Aorta (tissue), 5 donors: ENCODE measurements at regions of chr7 and their contacts with region 1.

Region 1: GRCh38 chr7:30062591-30062990 is 34.4 kb downstream of the PLEKHA8 start:
- DNase-seq: no peak
- ATAC-seq: peak; percentile 83
- H3K4me3 ChIP-seq: no peak overlapping the region
- H3K27ac ChIP-seq: no peak overlapping the region
- H3K4me1 ChIP-seq: no peaks in the 10 kb centered on the region
- H3K27me3 ChIP-seq: no peaks in the 10 kb centered on the region

Region 2: DNA sequence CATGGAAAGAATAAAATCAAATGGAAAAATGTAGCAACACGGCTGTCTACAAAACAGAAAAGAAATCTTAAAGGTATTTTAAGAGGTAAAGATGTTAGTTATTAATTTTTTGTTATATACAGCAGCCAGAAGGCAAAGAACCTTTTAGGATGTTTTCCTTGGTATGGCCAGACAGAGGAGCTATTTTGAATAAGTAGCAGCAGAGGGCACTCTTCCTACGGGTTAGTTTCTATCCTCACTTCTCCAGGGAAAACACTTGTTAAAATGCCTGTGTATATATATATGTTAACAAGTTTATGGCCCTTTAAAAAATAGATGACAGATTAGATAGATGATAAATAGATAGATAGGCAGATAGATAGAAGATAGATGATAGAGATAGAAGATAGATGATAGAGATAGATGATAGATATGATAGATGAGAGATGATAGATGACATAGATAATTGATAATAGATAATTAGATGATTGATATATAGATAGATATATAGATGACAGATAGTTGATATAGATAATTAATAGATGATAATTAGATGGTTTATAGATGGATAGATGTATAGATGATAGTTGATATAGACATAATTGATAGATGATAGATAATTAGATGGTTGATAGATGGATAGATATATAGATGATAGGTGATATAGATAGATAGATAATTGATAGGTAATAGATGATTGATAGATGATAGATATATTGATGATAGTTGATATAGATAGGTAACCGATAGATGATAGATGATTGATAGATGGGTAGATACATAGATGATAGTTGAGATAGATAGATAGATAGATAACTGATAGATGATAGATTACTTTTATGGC is 314.1 kb before region 1 on chr7:
- intact Hi-C with region 1: loop called in 1 of 2 experiments (anchors 5 kb)
- DNase-seq: no peak
- ATAC-seq: peak; percentile 82
- H3K4me3 ChIP-seq: no peak overlapping the region
- H3K27ac ChIP-seq: no peak overlapping the region
- H3K4me1 ChIP-seq: no peaks in the 10 kb centered on the region
- H3K27me3 ChIP-seq: no peaks in the 10 kb centered on the region

Region 3: GRCh38 chr7:29764227-29764626 is 298.4 kb before region 1 on chr7:
- intact Hi-C with region 1: no loop called
- DNase-seq: no peak
- ATAC-seq: no peak
- H3K4me3 ChIP-seq: no peak overlapping the region
- H3K27ac ChIP-seq: no peak overlapping the region
- H3K4me1 ChIP-seq: no peaks in the 10 kb centered on the region
- H3K27me3 ChIP-seq: no peaks in the 10 kb centered on the region

Region 4: DNA sequence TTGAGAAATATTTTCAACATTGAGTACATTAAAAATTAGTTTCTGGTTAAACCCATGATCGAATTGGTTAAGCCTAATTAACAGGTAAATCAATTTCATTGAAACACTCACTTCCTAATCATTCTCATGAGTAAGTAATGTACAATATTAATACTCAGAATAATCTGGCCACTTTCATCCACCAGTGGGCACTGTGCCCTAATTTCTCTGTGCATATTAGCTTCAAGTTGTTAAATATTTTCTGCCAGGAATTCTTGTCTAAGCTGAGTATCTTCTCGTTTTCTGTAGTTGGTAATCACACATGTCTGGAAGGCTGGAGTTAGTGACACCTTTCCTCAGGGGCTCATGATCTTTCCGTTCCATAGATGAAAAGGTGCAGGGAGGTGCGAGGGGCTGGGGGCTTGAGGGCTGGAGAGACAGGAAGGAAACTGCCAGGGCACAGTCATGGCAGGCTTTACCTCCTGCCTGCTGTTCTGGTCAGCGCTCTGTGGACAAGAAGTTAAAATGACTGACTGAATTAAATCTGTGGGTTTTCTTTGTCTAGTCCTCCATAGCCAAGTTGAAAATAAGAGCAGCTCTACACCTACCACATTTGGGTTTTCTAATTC is 184.4 kb before region 1 on chr7:
- intact Hi-C with region 1: loop called (anchors 5 to 10 kb)
- DNase-seq: no peak
- ATAC-seq: no peak
- H3K4me3 ChIP-seq: no peak overlapping the region
- H3K27ac ChIP-seq: no peak overlapping the region
- H3K4me1 ChIP-seq: no peaks in the 10 kb centered on the region
- H3K27me3 ChIP-seq: no peaks in the 10 kb centered on the region

Region 5: GRCh38 chr7:29946428-29947186 is 116.0 kb before region 1 on chr7:
- intact Hi-C with region 1: loop called (anchors 10 kb)
- DNase-seq: peak in 1 of 2 donors; percentile 62
- ATAC-seq: peak; percentile 67
- H3K4me3 ChIP-seq: no peak overlapping the region
- H3K27ac ChIP-seq: no peak overlapping the region
- H3K4me1 ChIP-seq: no peaks in the 10 kb centered on the region
- H3K27me3 ChIP-seq: no peaks in the 10 kb centered on the region

Region 6: GRCh38 chr7:29955799-29956486 is 106.6 kb before region 1 on chr7:
- intact Hi-C with region 1: loop called in 1 of 2 experiments (anchors 10 kb)
- DNase-seq: peak in 1 of 2 donors; percentile 59
- ATAC-seq: peak; percentile 46
- H3K4me3 ChIP-seq: no peak overlapping the region
- H3K27ac ChIP-seq: no peak overlapping the region
- H3K4me1 ChIP-seq: peaks cover 0 to 2% of the 10 kb centered on the region in 2 donors
- H3K27me3 ChIP-seq: no peaks in the 10 kb centered on the region